MCF 10A (cell line): ENCODE measurements at regions of chr17 and their contacts with region 1.

Region 1: DNA sequence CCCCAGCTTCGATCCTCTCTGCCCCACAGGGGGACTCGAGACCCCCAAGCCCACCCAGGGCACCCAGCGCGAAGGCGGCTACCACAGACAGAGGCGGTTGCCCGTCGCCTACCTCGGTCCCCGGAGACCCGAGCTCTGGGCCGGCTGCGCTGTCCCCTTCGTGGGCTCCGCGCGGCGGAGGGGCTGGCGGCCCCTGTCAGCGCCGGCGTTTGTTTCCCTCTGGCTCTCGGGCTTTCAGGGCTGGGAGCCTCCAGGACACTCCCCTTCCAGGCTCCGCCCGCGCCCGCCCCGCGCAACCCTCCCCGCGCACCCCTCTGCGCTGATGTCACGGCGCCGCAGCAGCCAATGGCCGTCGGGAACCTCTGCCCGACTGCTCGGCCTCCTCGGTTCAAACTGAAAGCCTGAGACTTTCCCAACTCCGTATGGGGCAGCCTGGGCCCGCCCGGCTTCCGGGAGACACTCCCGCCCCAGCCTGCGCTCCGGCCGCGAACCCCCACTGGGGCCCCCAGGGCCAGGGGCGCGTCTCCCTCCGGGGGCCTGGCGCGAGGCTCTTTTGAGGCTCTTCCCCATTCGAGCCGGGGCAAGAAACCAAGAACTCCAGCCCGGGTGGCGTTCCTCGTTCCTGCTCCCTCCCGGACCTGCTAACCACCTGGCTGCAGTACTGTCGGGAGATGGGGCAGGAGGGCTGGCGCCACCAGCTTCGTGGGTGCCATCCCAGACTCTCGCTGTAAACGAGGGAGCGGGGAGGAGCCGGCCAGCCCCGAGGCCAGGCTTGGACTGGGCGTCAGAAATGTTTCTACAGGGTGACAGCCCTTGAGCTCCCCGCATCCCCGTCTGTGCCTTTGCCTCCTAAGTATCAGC is at the start of gene CDC42EP4:
- DNase-seq: peak; percentile 95
- H3K4me3 Mint-ChIP-seq: peak within 1 kb of the TSS; percentile 92
- H3K27ac Mint-ChIP-seq: peak within 1 kb of the TSS; percentile 96
- H3K4me1 Mint-ChIP-seq: peaks cover 17% of the 10 kb centered on the region
- H3K27me3 Mint-ChIP-seq: no peaks in the 10 kb centered on the region
- CTCF ChIP-seq: no peak
- total RNA-seq, gene CDC42EP4: 11.0 and 12.2 TPM in 2 replicates

Region 2: GRCh38 chr17:72985881-72986720 is 325.9 kb before region 1 on chr17:
- CTCF ChIA-PET with region 1: no interaction called
- POLR2A ChIA-PET with region 1: no interaction called
- intact Hi-C with region 1: no loop called
- DNase-seq: peak; percentile 82
- H3K4me3 Mint-ChIP-seq: no peak overlapping the region
- H3K27ac Mint-ChIP-seq: no peak overlapping the region
- H3K4me1 Mint-ChIP-seq: no peaks in the 10 kb centered on the region
- H3K27me3 Mint-ChIP-seq: no peaks in the 10 kb centered on the region
- CTCF ChIP-seq: peak; percentile 84

Region 3: DNA sequence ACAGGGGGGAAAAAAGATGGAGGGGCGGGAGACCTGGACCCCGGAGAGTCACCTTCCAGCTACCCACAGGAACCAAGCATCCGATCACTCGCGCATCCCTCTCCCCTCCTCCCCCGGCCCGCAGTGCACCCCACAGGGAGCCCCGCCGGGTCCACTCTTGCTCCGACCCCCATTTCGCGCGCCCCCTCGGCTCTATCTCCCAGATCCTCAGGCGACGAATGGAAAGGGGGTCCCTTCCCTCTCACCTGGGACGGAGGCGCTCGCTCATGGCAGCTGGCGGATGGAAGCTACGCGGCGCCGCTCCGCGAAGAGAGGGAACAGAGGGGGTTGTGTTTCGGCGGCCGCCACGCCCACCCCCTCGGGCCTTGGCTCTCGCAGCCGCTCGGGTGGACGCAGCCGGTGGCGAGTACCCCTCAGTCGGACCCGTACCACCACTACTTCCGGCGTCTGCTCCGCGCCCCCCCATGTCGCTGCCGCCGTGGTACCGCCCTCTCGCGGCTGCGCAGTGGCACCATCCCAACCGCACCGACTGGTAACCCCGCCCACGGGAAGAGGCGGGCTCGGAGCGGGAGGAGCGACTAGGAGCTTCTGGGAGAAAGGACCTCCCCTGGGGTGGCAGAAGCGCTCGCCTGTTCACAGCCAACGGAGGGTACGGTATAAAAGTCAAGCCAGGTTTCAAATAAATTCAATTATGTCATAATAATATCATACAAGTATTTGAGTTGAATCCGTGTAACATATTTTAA is 80.0 kb before region 1 on chr17:
- CTCF ChIA-PET with region 1: interaction called, 5 read pairs
- POLR2A ChIA-PET with region 1: interaction called, 84 read pairs
- intact Hi-C with region 1: no loop called
- DNase-seq: peak; percentile 93
- H3K4me3 Mint-ChIP-seq: peak overlapping the region; percentile 97
- H3K27ac Mint-ChIP-seq: peak overlapping the region; percentile 90
- H3K4me1 Mint-ChIP-seq: peaks cover 28% of the 10 kb centered on the region
- H3K27me3 Mint-ChIP-seq: no peaks in the 10 kb centered on the region
- CTCF ChIP-seq: no peak

Region 4: GRCh38 chr17:73255671-73256181 is 56.3 kb before region 1 on chr17:
- CTCF ChIA-PET with region 1: interaction called, 8 read pairs
- POLR2A ChIA-PET with region 1: interaction called, 4 read pairs
- intact Hi-C with region 1: loop called (anchors 1 kb)
- DNase-seq: peak; percentile 43
- H3K4me3 Mint-ChIP-seq: no peak overlapping the region
- H3K27ac Mint-ChIP-seq: no peak overlapping the region
- H3K4me1 Mint-ChIP-seq: no peaks in the 10 kb centered on the region
- H3K27me3 Mint-ChIP-seq: no peaks in the 10 kb centered on the region
- CTCF ChIP-seq: peak; percentile 98

Region 5: DNA sequence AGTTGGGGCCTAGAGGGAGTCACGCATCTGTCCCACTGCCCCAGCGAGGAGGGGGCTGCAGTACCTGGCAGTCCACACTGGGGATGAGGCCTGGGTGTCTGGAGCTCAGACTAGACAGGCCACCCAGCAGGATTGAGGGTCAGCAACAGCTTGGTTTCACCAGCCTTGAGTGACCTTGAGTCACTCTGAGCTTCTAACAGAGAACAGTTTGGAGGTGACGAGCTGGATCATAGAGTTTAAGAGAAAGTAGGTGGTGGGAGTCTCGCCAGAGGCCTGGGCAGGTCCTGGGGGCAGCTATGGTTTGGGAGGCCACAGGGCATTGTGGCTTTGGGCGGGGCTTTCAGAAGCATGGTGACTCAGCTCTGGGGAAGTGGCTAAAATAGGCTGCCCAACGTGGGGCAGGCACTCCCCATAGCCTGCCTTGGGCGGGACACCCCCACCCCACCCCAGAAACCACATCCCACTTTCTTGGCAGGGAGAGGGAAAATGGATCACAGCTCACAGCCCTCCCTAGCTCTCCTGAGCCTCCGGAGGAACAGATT is 20.7 kb before region 1 on chr17:
- CTCF ChIA-PET with region 1: interaction called, 9 read pairs
- POLR2A ChIA-PET with region 1: interaction called, 96 read pairs
- intact Hi-C with region 1: loop called (anchors 2 kb)
- DNase-seq: peak; percentile 94
- H3K4me3 Mint-ChIP-seq: peak overlapping the region; percentile 54
- H3K27ac Mint-ChIP-seq: peak overlapping the region; percentile 89
- H3K4me1 Mint-ChIP-seq: peaks cover 65% of the 10 kb centered on the region
- H3K27me3 Mint-ChIP-seq: no peaks in the 10 kb centered on the region
- CTCF ChIP-seq: no peak

Region 6: DNA sequence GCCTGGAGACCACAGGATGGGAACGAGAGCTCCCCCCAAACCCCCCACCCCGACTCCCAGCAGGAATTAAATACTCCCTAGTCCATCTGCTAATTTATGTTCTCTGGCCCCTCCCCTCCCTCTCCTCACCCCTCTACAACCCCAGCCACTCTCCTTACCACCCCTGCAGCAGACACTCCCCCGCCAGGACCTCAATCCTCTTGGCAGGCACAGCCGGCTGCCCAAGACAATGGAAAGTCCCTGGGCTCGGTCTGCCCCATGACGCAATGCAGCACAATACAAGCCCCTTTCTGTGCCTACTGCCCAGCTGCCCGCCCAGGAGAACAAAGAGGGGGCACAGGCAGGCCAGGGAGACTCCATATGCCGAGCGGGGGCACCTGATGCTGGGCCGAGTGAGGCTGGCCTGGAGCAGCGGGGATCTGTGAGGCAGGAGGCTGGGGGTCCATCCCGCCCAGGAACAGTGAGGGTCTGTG is 30.1 kb after region 1 on chr17:
- CTCF ChIA-PET with region 1: interaction called, 5 read pairs
- POLR2A ChIA-PET with region 1: interaction called, 102 read pairs
- intact Hi-C with region 1: loop called (anchors 1 kb)
- DNase-seq: peak; percentile 93
- H3K4me3 Mint-ChIP-seq: peak overlapping the region; percentile 8
- H3K27ac Mint-ChIP-seq: peak overlapping the region; percentile 54
- H3K4me1 Mint-ChIP-seq: peaks cover 25% of the 10 kb centered on the region
- H3K27me3 Mint-ChIP-seq: no peaks in the 10 kb centered on the region
- CTCF ChIP-seq: no peak

Region 7: DNA sequence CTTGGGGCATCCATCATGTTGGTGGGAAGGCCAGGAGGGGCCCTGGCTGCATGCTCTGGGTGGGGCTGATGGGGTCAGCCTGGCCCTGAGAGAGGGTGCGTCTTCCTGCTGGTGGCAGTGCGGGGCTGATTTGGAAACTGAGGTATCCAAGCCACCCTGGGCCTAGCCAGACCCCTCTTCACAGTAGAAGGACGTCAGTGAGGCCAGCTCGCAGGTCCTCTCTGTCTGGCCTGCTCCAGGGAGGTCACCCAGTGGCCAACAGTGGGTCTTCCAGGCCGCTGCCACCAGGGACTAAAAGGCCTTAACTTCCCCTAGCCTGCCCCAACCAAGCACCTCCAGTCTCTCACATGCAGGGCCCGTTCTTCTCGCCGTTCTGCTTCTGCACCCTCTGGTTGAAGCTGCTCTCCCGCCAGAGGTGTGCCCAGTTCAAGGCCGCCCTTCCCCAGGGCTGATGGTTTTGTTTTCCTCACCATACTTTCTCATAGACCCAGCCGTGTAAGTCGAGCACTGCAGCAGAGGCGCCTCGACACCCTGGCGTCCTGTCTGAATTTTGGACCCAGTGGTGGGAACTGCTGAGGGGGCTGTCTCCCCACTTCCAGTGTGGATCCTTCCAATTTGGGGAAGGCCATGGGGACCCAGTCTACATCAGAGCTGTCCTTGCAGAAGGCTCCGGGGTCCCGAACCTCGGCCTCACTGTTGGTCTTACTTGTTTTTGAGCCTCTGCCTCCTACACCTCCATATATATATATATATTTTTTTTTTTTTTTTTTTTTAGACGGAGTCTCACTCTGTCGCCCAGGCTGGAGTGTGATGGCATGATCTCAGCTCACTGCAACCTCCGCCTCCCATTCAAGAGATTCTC is 42.6 kb after region 1 on chr17:
- CTCF ChIA-PET with region 1: interaction called, 8 read pairs
- POLR2A ChIA-PET with region 1: interaction called, 20 read pairs
- intact Hi-C with region 1: loop called (anchors 1 kb)
- DNase-seq: no peak
- H3K4me3 Mint-ChIP-seq: no peak overlapping the region
- H3K27ac Mint-ChIP-seq: no peak overlapping the region
- H3K4me1 Mint-ChIP-seq: peaks cover 12% of the 10 kb centered on the region
- H3K27me3 Mint-ChIP-seq: no peaks in the 10 kb centered on the region
- CTCF ChIP-seq: no peak

Region 8: DNA sequence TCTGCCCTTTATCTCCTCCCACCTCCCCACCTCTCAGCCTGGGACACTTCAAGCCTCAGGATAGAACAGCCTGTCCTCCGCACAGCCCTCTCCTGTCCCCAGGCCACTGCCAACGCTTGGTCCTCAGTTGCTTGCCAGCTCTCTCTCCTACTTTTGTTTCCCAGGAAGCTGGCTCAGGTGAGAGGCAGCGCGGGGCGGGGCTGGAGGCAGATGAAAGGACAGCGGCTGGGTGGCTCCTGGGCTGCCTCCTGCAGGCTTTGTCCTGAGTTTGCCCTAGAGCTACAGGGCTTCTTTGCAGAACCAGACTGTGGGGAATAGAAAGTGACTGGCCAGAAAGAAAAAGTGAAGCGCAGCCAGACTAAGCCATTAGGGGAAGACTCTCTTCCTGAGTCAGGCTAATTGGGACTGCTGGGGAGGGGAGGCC is 48.0 kb after region 1 on chr17:
- CTCF ChIA-PET with region 1: interaction called, 8 read pairs
- POLR2A ChIA-PET with region 1: interaction called, 20 read pairs
- intact Hi-C with region 1: loop called (anchors 1 kb)
- DNase-seq: peak; percentile 71
- H3K4me3 Mint-ChIP-seq: no peak overlapping the region
- H3K27ac Mint-ChIP-seq: no peak overlapping the region
- H3K4me1 Mint-ChIP-seq: peaks cover 20% of the 10 kb centered on the region
- H3K27me3 Mint-ChIP-seq: no peaks in the 10 kb centered on the region
- CTCF ChIP-seq: no peak